ENCODE measurements at regions of chr1 and their contacts with region 1.

Region 1: DNA sequence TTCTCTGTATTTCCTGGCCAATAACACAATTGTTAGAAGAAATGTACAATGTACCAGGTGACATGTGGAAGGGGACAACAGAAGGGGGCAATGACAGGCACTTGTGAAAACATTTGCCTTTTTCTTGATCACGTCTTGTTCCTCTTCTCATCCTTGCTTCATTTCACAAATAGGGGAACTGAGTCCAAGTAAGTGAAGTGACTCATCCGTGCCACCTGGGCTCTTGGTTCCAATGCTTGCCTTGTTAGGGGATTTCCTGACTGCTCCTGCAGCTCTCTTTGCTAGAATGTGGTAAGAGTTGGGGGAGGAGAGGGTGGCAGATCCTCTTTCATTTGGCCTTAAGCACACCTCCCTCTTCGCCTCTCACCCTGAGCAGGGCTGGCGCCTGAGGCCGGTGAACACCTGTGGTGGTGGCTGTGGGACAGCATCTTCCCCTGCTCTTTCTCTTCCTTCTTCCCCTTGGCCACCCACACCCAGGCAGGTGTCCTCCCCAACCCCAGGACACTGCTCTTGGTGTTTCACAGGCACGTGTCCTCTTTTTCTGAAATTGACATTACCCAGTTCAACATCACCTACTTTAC is 2.2 kb upstream of the RHEX start:
- DNase-seq: peak; percentile 61
- H3K4me3 Mint-ChIP-seq: peak overlapping the region; percentile 65
- H3K27ac Mint-ChIP-seq: peak overlapping the region; percentile 82
- H3K4me1 Mint-ChIP-seq: peaks cover 55% of the 10 kb centered on the region
- H3K27me3 Mint-ChIP-seq: peaks cover 8% of the 10 kb centered on the region

Region 2: DNA sequence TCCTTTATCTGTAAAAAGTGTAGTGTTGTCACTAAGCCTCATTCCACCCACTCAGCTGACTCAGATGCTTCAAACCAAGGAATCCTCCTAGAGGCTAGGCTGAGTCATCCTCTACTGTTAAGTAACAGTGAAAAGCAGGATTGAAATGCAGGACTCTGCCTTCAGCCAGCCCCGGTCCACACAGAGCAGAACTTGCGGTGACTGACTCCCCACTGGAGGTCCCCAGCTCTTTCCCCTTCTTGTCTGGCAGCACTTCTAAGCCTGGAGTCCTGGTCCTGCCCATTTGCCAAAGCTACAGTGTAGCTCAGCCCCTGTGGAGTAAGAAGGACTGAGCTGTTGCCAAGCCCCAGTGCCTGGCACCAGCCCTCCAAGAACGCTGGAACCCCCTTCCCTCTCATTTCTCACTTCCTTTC is 49.3 kb before region 1 on chr1:
- intact Hi-C with region 1: loop called (anchors 5 kb)
- DNase-seq: no peak
- H3K4me3 Mint-ChIP-seq: no peak overlapping the region
- H3K27ac Mint-ChIP-seq: peak overlapping the region; percentile 10
- H3K4me1 Mint-ChIP-seq: peaks cover 37% of the 10 kb centered on the region
- H3K27me3 Mint-ChIP-seq: peaks cover 2% of the 10 kb centered on the region

Region 3: DNA sequence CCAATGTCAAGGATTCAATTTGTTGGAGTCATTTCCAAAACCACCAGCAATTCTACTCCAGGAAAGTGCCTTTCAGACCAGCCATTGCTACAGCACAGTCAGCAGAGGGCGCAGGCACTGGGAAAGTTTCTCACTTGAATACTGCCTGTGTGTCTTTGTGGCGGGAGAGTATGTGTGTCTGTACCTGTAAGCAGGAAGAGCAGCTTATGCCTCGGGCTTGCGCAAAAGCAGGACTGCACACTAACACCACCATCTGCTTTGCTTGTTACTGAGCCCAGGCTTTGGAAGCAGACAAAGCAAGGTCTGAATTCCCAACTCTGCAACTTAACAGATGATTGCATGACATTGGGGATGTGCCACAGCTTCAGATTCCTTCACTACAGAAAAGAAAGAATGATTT is 20.0 kb before region 1 on chr1:
- intact Hi-C with region 1: loop called (anchors 1 kb)
- DNase-seq: peak; percentile 69
- H3K4me3 Mint-ChIP-seq: no peak overlapping the region
- H3K27ac Mint-ChIP-seq: no peak overlapping the region
- H3K4me1 Mint-ChIP-seq: peaks cover 17% of the 10 kb centered on the region
- H3K27me3 Mint-ChIP-seq: peaks cover 59% of the 10 kb centered on the region

Region 4: GRCh38 chr1:206036663-206037455 is 13.9 kb before region 1 on chr1:
- intact Hi-C with region 1: loop called (anchors 2 kb)
- DNase-seq: no peak
- H3K4me3 Mint-ChIP-seq: no peak overlapping the region
- H3K27ac Mint-ChIP-seq: no peak overlapping the region
- H3K4me1 Mint-ChIP-seq: peaks cover 34% of the 10 kb centered on the region
- H3K27me3 Mint-ChIP-seq: peaks cover 61% of the 10 kb centered on the region

Region 5: DNA sequence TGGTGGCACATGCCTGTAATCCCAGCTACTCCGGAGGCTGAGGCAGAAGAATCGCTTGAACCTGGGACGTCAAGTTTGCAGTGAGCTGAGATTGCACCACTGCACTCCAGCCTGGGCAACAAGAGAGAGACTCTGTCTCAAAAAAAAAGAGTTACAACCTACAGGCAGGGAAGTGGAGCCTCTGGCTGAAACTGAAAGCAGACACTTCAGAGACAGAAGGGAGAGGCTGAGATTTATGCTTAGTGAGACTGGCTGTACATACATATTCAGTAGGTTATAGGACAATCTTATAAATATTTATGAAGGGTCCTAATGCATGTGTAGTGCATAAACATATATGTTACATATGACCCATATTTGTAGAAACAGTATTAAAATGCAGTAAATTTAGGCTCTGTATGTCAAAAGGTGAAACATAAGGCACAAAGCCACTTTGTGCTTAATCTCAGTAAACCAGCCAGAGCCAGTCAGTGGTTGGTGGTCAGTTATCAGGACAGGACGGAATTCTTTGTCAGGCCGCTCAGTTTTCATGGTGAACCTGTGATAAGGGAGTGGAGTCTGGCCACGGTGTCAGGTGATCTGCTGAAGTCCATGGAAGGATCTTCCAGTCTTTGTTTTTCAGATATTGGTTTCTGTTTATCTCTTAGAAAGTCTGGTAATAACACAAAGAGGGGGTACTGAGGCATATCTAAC is 15.9 kb after region 1 on chr1:
- intact Hi-C with region 1: loop called (anchors 2 kb)
- DNase-seq: no peak
- H3K4me3 Mint-ChIP-seq: no peak overlapping the region
- H3K27ac Mint-ChIP-seq: no peak overlapping the region
- H3K4me1 Mint-ChIP-seq: peaks cover 18% of the 10 kb centered on the region
- H3K27me3 Mint-ChIP-seq: peaks cover 55% of the 10 kb centered on the region